A549 (cell line): ENCODE measurements at regions of chr11 and their contacts with region 1.

Region 1: DNA sequence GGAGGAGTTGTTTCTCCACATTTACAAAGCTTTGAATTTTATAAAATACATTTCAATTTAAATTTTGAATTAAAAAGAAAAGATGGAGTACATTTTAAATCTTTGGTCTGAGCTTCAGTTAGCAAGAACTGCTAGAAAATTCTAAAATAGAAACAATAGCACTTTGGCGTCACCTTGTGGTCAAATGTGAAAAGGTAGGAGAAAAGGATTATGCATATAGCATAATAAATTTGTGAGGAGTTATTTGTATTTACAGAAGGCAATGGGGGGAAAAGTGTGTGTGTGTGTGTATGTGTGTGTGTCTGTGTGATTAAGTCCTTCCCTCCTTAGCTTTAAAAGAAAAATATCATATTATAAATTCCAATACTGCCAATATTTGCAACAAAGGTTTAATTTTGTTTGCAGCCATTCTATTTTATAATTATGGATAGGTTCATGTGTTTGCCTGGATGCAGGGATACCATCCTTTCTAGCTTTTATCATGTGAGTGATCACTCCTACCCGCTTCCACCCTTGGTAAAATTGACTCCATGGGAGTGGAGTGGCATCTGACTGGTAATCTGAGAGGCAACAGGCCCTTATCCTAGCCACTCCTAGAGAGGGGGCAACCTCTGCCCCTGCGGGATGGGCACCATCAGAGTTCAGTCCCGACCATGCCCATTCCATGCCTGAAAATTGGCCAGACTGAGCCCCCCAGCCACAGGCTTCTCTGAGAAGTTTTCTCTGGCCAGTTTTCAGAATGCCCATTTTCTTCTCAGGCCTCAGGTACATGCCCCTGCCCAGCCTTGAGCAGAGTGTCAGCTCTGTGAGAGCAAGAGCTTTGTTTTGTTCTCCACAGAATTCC is 13.6 kb upstream of the LGR4 start:
- DNase-seq: peak in 1 of 2 experiments; percentile 71
- ATAC-seq: peak; percentile 44 to 75; a peak in 5 of 6 replicates
- H3K4me3 ChIP-seq: no peak overlapping the region
- H3K27ac ChIP-seq: peak overlapping the region; percentile 37 to 48; a peak in 5 of 6 replicates
- H3K4me1 ChIP-seq: peaks cover 12% of the 10 kb centered on the region; the same call in 2 of the 3 replicates
- CTCF ChIP-seq: peak; percentile 98
- EP300 ChIP-seq: no peak
- POLR2A ChIP-seq: no peak
- RAD21 ChIP-seq: peak; percentile 98 to 99

Region 2: DNA sequence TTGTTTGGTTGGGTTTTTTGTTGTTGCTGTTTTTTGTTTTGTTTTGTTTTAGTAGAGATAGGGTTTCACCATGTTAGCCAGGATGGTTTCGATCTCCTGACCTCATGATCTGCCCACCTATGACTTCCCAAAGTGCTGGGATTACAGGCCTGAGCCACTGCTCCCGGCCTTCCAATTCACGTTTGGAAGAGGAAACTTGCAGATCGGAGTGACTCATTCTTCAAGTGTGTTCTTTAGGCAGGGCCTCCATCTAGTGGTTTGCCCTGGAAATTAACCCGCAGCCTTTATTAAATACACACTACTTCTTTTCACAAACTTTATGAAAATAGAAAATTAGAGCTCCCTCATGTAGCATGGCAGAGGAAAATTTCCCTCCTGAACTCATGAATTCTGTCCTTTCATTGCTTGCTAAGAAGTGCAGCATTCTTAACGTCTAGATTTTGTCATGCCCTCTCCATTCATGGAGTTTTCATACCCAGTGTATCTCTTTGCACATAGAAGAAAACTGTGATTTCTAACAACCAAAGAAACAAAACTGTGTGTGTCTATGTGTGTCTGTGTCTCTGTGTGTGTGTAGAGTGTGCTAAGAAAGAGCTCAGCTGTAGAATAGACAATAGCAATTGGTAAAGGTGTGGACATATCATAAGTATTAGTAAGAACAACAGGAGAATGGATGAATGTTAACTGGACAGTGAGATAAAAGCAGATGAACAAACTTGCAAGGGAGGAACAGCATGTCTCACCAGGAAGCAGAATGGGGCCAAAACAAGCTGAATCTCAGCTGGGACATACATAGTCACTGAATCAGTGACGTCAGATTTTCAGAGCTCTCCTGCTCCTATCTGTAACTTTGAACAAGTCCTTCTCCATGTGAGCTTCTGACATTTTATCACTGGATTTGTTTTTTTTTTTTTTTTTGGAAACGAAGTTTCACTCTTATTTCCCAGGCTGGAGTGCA is 327.2 kb before region 1 on chr11:
- CTCF ChIA-PET with region 1: interaction called, 21 read pairs
- POLR2A ChIA-PET with region 1: no interaction called
- DNase-seq: peak; percentile 80 to 84
- ATAC-seq: peak; percentile 92 to 97
- H3K4me3 ChIP-seq: no peak overlapping the region
- H3K27ac ChIP-seq: no peak overlapping the region
- H3K4me1 ChIP-seq: no peaks in the 10 kb centered on the region
- CTCF ChIP-seq: peak; percentile 90
- EP300 ChIP-seq: no peak
- POLR2A ChIP-seq: no peak
- RAD21 ChIP-seq: peak; percentile 93 to 95

Region 3: DNA sequence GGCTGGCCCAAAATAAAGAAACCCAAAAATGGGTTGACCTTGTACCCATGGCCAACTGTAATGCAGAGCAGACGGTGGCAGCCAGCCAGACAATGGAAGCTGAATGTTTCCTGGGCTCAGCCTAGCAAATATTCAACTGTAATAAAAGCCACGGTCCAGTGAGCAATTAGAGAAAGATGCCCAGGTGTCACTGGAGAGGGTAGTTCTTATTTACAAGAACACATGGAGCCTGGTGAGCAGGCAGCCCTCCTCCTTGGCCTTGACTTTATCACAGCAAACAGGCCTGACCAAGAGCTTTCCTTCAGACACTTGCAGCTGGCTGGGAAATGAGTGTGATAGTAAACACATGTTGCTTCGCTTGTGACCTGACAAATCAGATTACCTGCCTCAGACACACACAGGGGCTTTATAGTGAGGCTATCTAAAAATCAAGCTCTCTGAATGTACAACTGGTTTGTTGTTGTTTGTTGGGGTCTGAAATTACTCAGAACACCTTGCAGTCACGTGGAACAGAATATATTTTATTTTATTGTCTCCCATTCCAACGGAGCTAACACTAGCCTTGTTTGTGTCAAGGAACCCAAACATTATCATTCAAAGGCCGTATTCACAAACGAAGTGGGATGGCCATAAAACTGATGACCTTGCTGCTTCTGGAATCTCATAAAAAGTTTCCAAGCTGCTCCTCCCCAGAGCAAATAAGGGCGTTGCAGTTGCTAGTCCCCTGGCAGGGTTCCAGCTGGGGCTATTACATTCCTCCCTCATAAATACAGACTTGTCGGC is 284.5 kb before region 1 on chr11:
- CTCF ChIA-PET with region 1: interaction called, 64 read pairs
- POLR2A ChIA-PET with region 1: no interaction called
- DNase-seq: peak; percentile 76 to 92
- ATAC-seq: peak; percentile 67 to 79; a peak in 5 of 6 replicates
- H3K4me3 ChIP-seq: no peak overlapping the region
- H3K27ac ChIP-seq: peak overlapping the region; percentile 77 to 80
- H3K4me1 ChIP-seq: peaks cover 62% of the 10 kb centered on the region
- CTCF ChIP-seq: no peak
- EP300 ChIP-seq: no peak; a peak in 1 of 5 replicates
- POLR2A ChIP-seq: no peak
- RAD21 ChIP-seq: 0 out of 5 replicates have a peak, but pooled peaks of 1 of the 2 experiments have one; percentile 24

Region 4: DNA sequence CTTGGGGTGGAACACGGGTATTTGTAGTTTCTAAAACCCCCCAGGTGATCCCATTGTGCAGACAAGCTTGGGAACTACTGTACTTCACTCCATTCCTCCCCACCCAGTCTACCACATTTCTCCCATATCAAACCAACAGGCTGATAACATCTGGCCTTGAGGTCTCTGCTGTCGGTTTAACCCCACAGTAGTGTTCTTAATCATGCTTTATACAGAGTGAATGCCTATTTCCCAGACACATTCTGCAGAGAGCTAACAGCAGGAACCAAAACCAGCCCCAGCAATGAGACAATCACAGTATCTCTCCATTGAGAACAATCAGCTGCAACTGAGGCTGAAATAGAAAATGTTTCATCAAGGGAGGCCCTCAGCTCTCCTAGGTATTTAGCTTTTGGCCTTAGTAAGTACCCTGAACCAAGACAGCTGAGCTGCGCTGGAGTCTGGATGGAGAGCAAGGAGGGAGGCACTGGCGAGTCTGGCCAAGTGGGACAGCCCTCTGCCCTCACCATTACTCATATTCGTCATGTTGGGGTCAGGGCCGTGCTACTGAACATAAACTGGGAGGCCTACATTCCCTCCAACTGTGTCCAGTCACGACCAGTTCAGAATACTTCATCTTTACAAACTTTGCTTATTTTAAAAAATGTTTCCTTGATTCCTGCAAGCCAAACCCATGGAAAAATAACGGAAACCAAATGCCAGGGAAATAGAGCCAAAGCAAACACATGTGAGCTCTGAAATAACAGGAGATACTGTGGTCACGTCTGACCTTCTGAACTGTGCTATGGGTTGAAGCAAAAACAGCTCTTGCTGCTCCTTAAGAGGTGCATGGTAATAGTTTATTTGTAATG is 204.2 kb before region 1 on chr11:
- CTCF ChIA-PET with region 1: interaction called, 10 read pairs
- POLR2A ChIA-PET with region 1: no interaction called
- DNase-seq: peak in 1 of 2 experiments; percentile 83
- ATAC-seq: peak; percentile 59 to 94
- H3K4me3 ChIP-seq: no peak overlapping the region
- H3K27ac ChIP-seq: peak overlapping the region; percentile 52 to 58; a peak in 5 of 6 replicates
- H3K4me1 ChIP-seq: peaks cover 20% of the 10 kb centered on the region
- CTCF ChIP-seq: no peak
- EP300 ChIP-seq: 0 out of 5 replicates have a peak, but pooled peaks of 1 of the 2 experiments have one; percentile 18
- POLR2A ChIP-seq: no peak
- RAD21 ChIP-seq: no peak; a peak in 1 of 5 replicates

Region 5: GRCh38 chr11:27296497-27296896 is 189.7 kb before region 1 on chr11:
- CTCF ChIA-PET with region 1: interaction called, 37 read pairs
- POLR2A ChIA-PET with region 1: no interaction called
- DNase-seq: peak; percentile 36 to 72
- ATAC-seq: peak; percentile 77 to 96; a peak in 5 of 6 replicates
- H3K4me3 ChIP-seq: no peak overlapping the region
- H3K27ac ChIP-seq: no peak overlapping the region
- H3K4me1 ChIP-seq: no peaks in the 10 kb centered on the region
- CTCF ChIP-seq: peak; percentile 79
- EP300 ChIP-seq: no peak
- POLR2A ChIP-seq: no peak
- RAD21 ChIP-seq: peak; percentile 81

Region 6: DNA sequence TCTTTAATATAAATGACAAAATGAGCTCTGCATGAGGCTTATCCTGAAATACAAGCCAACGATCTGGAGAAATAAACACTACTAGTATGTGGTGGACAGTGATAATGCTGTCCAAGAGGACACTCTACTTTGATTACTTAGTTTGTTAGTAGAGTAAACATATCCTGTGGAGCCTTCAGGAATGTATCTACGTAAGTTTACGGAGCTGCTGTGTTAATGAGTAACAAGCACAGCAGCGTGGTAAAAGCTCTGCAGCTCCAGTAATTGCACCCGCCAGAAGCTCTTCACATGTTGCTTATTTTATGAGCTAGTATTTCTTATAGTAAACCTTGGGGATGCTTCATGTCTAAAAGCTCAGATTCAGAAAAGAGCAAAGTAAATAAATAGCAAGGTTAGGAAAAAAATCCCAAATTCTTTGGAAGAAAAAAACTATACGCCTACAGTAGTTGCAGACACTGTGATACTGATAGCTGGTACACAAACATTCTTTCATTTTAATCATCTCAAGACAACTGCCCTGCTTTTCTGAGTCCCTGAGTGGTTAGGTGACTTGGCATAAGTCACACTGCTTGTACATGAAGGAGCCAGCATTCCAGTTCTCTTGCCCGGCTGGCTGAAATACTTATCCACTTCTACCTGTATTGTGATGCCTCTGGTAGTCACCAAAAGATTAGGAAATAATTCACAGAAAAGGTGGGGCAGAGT is 90.4 kb before region 1 on chr11:
- CTCF ChIA-PET with region 1: interaction called, 37 read pairs
- POLR2A ChIA-PET with region 1: interaction called, 3 read pairs
- DNase-seq: peak; percentile 40 to 97
- ATAC-seq: peak; percentile 90 to 95
- H3K4me3 ChIP-seq: peak overlapping the region; percentile 26; the same call in 2 of the 3 replicates
- H3K27ac ChIP-seq: peak overlapping the region; percentile 90 to 96
- H3K4me1 ChIP-seq: peaks cover 93% of the 10 kb centered on the region
- CTCF ChIP-seq: no peak
- EP300 ChIP-seq: peak; percentile 94
- POLR2A ChIP-seq: no peak
- RAD21 ChIP-seq: peak; percentile 19 to 56; a peak in 3 of 5 replicates

Region 7: GRCh38 chr11:27472398-27473016 is 13.6 kb before region 1 on chr11 and contains the start of gene LGR4:
- CTCF ChIA-PET with region 1: interaction called, 65 read pairs
- POLR2A ChIA-PET with region 1: interaction called, 5 read pairs
- DNase-seq: peak; percentile 84 to 96
- ATAC-seq: peak; percentile 86 to 95
- H3K4me3 ChIP-seq: peak within 1 kb of the TSS; percentile 89
- H3K27ac ChIP-seq: peak within 1 kb of the TSS; percentile 94 to 98
- H3K4me1 ChIP-seq: peaks cover 16% of the 10 kb centered on the region; the same call in 2 of the 3 replicates
- CTCF ChIP-seq: no peak
- EP300 ChIP-seq: no peak
- POLR2A ChIP-seq: peak; percentile 84
- RAD21 ChIP-seq: peak in 1 of 2 experiments; percentile 20; a peak in 2 of 5 replicates
- polyA plus RNA-seq, gene LGR4: 130 and 145 TPM in 2 replicates

Region 8: GRCh38 chr11:27563201-27563600 is 77.0 kb after region 1 on chr11:
- CTCF ChIA-PET with region 1: no interaction called
- POLR2A ChIA-PET with region 1: no interaction called
- DNase-seq: no peak
- ATAC-seq: no peak
- H3K4me3 ChIP-seq: no peak overlapping the region
- H3K27ac ChIP-seq: no peak overlapping the region
- H3K4me1 ChIP-seq: no peaks in the 10 kb centered on the region
- CTCF ChIP-seq: no peak
- EP300 ChIP-seq: no peak
- POLR2A ChIP-seq: no peak
- RAD21 ChIP-seq: no peak